ENCODE measurements at regions of chr5 and their contacts with region 1.

Region 1: GRCh38 chr5:91101600-91102379 is 281.3 kb downstream of the ARRDC3 start:
- DNase-seq: peak; percentile 54 to 61
- H3K4me3 ChIP-seq: no peak overlapping the region
- H3K27ac ChIP-seq: no peak overlapping the region
- H3K4me1 ChIP-seq: peaks cover 7% of the 10 kb centered on the region; the same call in 1 of the 2 replicates
- H3K27me3 ChIP-seq: no peaks in the 10 kb centered on the region
- CTCF ChIP-seq: peak; percentile 86

Region 2: GRCh38 chr5:90866333-90866732 is 235.5 kb before region 1 on chr5:
- CTCF ChIA-PET with region 1: no interaction called
- POLR2A ChIA-PET with region 1: no interaction called
- intact Hi-C with region 1: loop called (anchors 1 kb)
- DNase-seq: peak in 1 of 2 experiments; percentile 45
- H3K4me3 ChIP-seq: no peak overlapping the region
- H3K27ac ChIP-seq: no peak overlapping the region
- H3K4me1 ChIP-seq: no peaks in the 10 kb centered on the region
- H3K27me3 ChIP-seq: no peaks in the 10 kb centered on the region
- CTCF ChIP-seq: peak; percentile 78

Region 3: DNA sequence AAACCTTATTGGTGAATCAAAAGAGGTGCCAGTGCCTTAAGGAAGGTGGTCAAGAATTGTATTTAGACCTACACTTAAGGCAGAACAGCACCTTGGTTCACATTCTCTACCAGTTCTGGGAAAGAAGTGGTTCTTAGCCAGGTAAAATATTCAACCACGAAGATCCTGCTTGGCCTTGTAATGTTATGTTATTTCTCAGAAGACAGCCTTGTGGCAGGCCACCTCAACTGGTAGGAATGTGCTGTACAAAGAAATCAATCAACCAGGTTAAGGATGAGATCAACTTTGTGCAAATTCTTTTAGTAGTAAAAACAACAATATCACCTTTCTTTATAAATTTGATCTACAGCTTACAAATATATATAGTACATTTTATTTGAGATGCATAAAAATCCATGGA is 34.5 kb after region 1 on chr5:
- CTCF ChIA-PET with region 1: no interaction called
- POLR2A ChIA-PET with region 1: no interaction called
- intact Hi-C with region 1: no loop called
- DNase-seq: peak; percentile 38 to 79
- H3K4me3 ChIP-seq: no peak overlapping the region
- H3K27ac ChIP-seq: peak overlapping the region; percentile 52
- H3K4me1 ChIP-seq: peaks cover 42% of the 10 kb centered on the region
- H3K27me3 ChIP-seq: no peaks in the 10 kb centered on the region
- CTCF ChIP-seq: no peak

Region 4: DNA sequence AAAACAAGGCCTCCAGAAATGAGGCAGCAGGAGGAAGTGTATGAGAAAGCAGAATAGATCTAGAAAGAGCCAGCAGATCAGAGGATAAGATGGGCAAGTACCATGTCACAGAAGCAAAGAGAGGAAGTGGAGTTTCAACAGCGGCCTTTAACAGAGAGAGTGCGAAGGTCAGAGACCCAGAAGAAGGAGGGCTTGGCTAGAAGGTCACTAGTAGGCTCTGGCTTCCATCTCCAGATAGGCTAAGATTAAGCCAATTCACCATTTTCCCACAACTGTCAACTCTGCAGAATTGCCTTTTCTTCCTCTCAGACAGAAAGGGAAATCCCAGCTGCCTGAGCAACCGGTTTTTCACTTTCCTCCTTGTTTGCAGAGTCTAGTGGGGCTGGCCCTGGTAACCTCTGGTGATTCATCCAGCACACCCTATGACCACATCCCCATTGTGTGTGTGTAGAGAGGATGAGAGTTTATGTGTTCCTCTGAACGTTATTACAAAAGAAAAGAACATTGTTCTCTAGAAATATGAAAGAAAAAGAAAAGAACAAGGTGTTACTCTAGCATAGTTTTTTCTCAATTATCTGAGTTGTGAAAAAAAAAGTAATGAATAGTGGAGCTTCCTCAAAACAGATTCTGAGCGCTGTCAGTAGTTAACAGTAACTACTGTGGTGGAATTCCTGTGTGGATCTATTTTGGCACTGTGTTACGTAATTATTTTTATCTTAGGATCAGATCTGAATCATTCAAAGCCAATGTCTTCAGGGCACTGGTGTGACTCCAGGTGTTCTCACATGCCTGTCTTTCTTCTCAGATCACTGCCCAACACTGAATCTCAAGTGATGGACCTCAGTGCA is 61.0 kb after region 1 on chr5:
- CTCF ChIA-PET with region 1: interaction called, 4 read pairs
- POLR2A ChIA-PET with region 1: no interaction called
- intact Hi-C with region 1: loop called (anchors 2 kb)
- DNase-seq: peak; percentile 83 to 97
- H3K4me3 ChIP-seq: peak overlapping the region; percentile 32; the same call in 1 of the 2 replicates
- H3K27ac ChIP-seq: peak overlapping the region; percentile 78
- H3K4me1 ChIP-seq: peaks cover 60% of the 10 kb centered on the region
- H3K27me3 ChIP-seq: no peaks in the 10 kb centered on the region
- CTCF ChIP-seq: no peak

Region 5: DNA sequence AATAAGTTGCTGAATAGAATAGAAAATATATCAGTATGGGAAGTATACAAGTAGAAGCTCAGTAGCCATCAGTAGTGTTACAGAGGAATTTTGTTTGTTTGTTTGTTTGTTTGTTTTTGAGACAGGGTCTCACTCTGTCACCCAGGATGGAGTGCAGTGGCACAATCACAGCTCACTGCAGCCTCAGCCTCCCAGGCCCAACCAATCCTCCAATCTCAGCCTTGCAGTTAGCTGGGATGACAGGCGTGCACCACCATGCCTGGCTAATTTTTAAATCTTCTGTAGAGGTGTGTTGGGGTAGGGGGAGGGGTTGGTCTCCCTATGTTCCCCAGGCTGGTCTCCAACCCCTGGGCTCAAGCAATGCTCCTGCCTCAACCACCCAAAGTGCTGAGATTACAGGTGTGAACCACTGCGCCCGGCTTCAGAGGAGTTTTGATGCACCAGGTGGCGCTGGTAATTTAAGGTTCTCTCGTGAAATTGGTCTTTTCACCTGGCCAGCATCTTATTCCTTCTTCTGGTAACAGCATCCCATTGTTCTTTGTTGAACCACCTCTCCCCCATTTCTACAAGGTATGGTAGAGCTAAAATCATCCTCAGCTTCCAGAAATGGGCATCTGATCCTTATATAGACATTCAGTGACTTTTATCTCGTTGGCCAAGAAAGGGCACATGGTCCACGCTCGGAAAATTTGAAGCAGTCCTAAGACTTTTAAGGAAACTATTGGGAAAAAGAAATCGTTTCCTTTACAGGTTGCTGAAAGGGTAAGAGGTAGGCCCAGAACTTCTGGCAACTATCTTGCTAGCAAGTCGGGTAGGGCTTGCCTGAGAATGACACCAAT is 124.3 kb after region 1 on chr5:
- CTCF ChIA-PET with region 1: no interaction called
- POLR2A ChIA-PET with region 1: interaction called, 5 read pairs
- intact Hi-C with region 1: loop called (anchors 1 kb)
- DNase-seq: peak in 1 of 2 experiments; percentile 46
- H3K4me3 ChIP-seq: no peak overlapping the region
- H3K27ac ChIP-seq: no peak overlapping the region
- H3K4me1 ChIP-seq: no peaks in the 10 kb centered on the region
- H3K27me3 ChIP-seq: no peaks in the 10 kb centered on the region
- CTCF ChIP-seq: peak; percentile 65

Region 6: GRCh38 chr5:91243852-91244251 is 142.1 kb after region 1 on chr5:
- CTCF ChIA-PET with region 1: no interaction called
- POLR2A ChIA-PET with region 1: no interaction called
- intact Hi-C with region 1: no loop called
- DNase-seq: no peak
- H3K4me3 ChIP-seq: no peak overlapping the region
- H3K27ac ChIP-seq: no peak overlapping the region
- H3K4me1 ChIP-seq: no peaks in the 10 kb centered on the region
- H3K27me3 ChIP-seq: no peaks in the 10 kb centered on the region
- CTCF ChIP-seq: no peak

Region 7: DNA sequence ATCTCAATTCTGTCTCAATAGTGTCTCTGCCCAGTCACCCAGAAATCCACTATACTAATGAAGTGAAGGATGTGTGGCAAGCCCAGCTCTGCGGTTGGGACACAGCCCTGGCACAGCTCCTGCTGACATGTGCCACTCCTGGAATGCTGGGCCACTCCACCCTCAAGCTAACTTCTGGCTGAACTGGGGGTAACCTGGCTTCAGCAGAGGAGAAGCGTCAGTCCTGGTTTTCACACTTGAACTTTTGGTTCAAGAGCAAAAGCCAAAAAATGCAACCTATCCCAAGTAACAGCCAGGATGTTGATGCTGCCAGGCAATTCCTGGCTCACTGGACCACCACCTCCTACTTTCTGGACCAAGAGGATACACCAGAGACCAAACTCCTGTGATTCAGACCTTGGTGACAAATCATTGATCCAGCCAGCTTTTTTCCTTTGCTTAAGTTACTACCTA is 194.9 kb after region 1 on chr5:
- CTCF ChIA-PET with region 1: no interaction called
- POLR2A ChIA-PET with region 1: no interaction called
- intact Hi-C with region 1: loop called (anchors 5 kb)
- DNase-seq: peak; percentile 84 to 94
- H3K4me3 ChIP-seq: peak overlapping the region; percentile 41; the same call in 1 of the 2 replicates
- H3K27ac ChIP-seq: peak overlapping the region; percentile 94
- H3K4me1 ChIP-seq: peaks cover 64% of the 10 kb centered on the region
- H3K27me3 ChIP-seq: no peaks in the 10 kb centered on the region
- CTCF ChIP-seq: no peak

Region 8: GRCh38 chr5:91419571-91420537 is 318.1 kb after region 1 on chr5:
- CTCF ChIA-PET with region 1: interaction called, 4 read pairs
- POLR2A ChIA-PET with region 1: no interaction called
- intact Hi-C with region 1: loop called (anchors 1 kb)
- DNase-seq: peak; percentile 53 to 68
- H3K4me3 ChIP-seq: no peak overlapping the region
- H3K27ac ChIP-seq: no peak overlapping the region
- H3K4me1 ChIP-seq: no peaks in the 10 kb centered on the region
- H3K27me3 ChIP-seq: no peaks in the 10 kb centered on the region
- CTCF ChIP-seq: peak; percentile 87

Measured in PC-9 (cell line).